Activated B cell treated with CpG ODN at 0.5 μM for 24 hours (primary cell): ENCODE measurements at regions of chr20 and their contacts with region 1.

Region 1: DNA sequence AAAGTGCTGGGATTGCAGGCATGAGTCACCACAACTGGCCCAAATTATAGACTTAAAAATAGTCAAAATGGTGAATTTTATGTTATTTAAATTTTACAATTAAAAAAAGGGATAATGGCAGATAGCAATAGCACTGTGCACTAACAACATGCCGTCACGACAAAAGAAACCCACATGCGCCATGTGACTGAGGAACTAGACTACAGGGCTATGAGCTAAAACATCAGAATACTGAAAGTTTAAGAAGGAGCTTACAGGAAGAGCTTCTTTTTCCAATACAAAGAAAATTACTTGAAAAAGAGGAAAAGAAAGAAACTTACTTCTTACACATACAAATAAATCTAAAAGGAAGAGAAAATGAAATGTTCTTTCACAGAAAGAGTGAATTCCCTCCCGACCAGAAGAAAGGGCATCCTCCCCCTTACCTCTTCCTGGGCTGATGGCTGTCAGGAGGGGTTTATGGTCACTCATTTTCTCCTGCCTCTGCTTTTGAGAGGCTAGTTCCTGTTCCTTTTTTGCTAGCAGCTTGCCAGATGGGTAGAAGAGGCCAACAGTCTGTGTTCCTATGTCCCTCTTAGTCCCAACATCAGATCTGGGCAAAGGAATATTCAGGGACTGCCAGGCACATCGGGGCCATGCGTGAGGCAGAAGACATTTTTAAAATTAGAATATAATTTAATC is 54.5 kb downstream of the DZANK1 start:
- DNase-seq: no peak
- ATAC-seq: peak; percentile 41
- H3K4me3 Mint-ChIP-seq: peak overlapping the region; percentile 69
- H3K27ac Mint-ChIP-seq: peak overlapping the region; percentile 88
- H3K4me1 Mint-ChIP-seq: peaks cover 18% of the 10 kb centered on the region
- H3K27me3 Mint-ChIP-seq: no peaks in the 10 kb centered on the region
- CTCF ChIP-seq: no peak

Region 2: GRCh38 chr20:18250217-18250616 is 162.1 kb before region 1 on chr20:
- CTCF ChIA-PET with region 1: no interaction called
- POLR2A ChIA-PET with region 1: no interaction called
- intact Hi-C with region 1: no loop called
- DNase-seq: no peak
- ATAC-seq: no peak
- H3K4me3 Mint-ChIP-seq: no peak overlapping the region
- H3K27ac Mint-ChIP-seq: no peak overlapping the region
- H3K4me1 Mint-ChIP-seq: no peaks in the 10 kb centered on the region
- H3K27me3 Mint-ChIP-seq: peaks cover 8% of the 10 kb centered on the region
- CTCF ChIP-seq: no peak

Region 3: DNA sequence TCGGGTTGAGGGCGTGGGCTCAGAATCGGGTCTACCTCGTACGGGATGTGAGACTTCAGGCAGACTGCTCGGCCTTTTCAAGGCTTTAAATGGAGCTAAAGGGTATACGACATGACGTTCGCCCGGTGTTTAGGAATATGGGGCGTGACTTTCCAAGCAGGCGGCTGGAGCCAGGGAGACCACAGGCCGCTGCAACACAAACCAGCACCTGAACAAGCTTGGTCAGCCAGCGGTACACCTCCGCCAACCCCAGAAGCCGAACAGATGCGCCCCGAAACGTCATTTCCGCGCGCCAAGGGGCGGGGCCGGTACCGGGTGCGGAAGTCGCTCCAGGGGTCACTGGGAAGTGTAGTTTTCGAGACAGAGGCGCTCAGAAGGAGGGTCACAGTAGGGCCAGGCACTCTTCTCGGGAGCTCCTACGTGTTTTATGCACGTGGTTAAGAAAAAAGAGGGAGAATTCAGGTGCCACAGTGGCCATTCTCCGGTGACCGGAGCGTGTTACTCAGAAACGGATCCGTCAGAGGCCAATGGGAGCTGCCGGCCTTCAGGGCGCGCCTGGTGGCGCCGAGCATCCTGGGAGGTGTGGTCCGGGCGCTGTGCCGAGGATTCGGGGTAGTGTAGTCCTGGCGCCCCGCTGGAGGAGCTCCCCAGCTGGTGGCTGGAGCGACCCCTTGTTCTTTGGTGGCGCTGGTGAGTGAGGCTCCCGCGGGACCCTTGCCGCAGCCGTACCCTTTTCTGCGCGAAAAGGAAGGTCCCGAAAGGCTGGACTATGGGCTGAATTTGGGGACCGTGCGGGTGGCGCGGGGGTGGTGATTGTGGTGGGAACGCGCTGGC is 124.2 kb before region 1 on chr20 and contains the start of gene ZNF133:
- CTCF ChIA-PET with region 1: no interaction called
- POLR2A ChIA-PET with region 1: no interaction called
- intact Hi-C with region 1: loop called (anchors 2 kb)
- DNase-seq: peak; percentile 99
- ATAC-seq: peak; percentile 96
- H3K4me3 Mint-ChIP-seq: peak within 1 kb of the TSS; percentile 92
- H3K27ac Mint-ChIP-seq: peak within 1 kb of the TSS; percentile 97
- H3K4me1 Mint-ChIP-seq: peaks cover 29% of the 10 kb centered on the region
- H3K27me3 Mint-ChIP-seq: peaks cover 16% of the 10 kb centered on the region
- CTCF ChIP-seq: no peak
- total RNA-seq, gene ZNF133: 7.7 and 8.0 TPM in 2 replicates

Region 4: GRCh38 chr20:18507218-18508021 is 95.1 kb after region 1 on chr20 and contains the start of gene SEC23B:
- CTCF ChIA-PET with region 1: no interaction called
- POLR2A ChIA-PET with region 1: interaction called, 12 read pairs
- intact Hi-C with region 1: loop called (anchors 1 kb)
- DNase-seq: peak; percentile 92
- ATAC-seq: peak; percentile 92
- H3K4me3 Mint-ChIP-seq: peak within 1 kb of the TSS; percentile 100
- H3K27ac Mint-ChIP-seq: peak within 1 kb of the TSS; percentile 100
- H3K4me1 Mint-ChIP-seq: peaks cover 36% of the 10 kb centered on the region
- H3K27me3 Mint-ChIP-seq: peaks cover 2% of the 10 kb centered on the region
- CTCF ChIP-seq: no peak
- total RNA-seq, gene SEC23B: 52.0 and 56.6 TPM in 2 replicates

Region 5: GRCh38 chr20:18587665-18588573 is 175.6 kb after region 1 on chr20 and contains the start of gene DTD1:
- CTCF ChIA-PET with region 1: no interaction called
- POLR2A ChIA-PET with region 1: no interaction called
- intact Hi-C with region 1: loop called (anchors 1 kb)
- DNase-seq: peak; percentile 88
- ATAC-seq: peak; percentile 95
- H3K4me3 Mint-ChIP-seq: peak within 1 kb of the TSS; percentile 93
- H3K27ac Mint-ChIP-seq: peak within 1 kb of the TSS; percentile 90
- H3K4me1 Mint-ChIP-seq: peaks cover 24% of the 10 kb centered on the region
- H3K27me3 Mint-ChIP-seq: peaks cover 9% of the 10 kb centered on the region
- CTCF ChIP-seq: no peak
- total RNA-seq, gene DTD1: 26.3 and 27.5 TPM in 2 replicates

Region 6: DNA sequence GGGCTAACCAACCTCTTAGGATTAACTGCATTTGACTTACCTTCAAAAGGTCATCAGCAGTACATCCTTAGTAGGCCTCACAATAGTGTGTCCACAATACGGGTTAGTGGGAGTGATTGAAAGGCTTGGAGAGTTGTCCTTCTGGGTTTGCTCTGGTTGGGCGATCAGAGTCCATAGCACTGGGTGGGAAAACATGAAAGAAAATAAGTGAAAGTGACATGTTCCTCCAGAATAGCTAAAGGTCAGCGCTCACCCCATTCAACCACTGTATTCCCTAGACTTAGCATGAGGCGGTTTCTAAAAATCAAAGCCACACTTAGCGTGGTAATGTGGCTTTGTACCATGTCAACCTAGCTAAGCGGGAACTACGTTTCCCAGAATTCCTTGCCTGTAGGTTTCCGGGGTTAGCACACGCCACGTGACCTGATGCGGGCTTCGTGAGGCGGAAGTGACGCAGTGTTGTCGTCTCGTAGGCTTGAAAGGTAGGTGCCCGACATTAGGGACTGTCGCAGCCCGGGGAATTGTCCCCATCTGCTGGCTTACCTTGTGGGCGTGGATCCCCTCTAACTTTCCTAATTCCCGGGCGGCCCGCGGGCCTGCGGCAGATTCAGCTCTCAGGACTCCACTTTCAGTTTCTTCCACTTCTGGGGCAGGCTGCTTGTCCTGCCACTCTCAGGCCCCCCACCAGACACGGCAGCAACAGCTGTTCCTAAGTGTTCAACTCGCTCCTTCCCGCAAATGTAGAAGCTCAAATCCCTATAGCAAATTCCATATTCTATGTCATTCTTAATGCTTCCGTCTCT is 381.5 kb after region 1 on chr20:
- CTCF ChIA-PET with region 1: no interaction called
- POLR2A ChIA-PET with region 1: no interaction called
- intact Hi-C with region 1: loop called (anchors 1 kb)
- DNase-seq: peak; percentile 73
- ATAC-seq: peak; percentile 92
- H3K4me3 Mint-ChIP-seq: peak overlapping the region; percentile 93
- H3K27ac Mint-ChIP-seq: peak overlapping the region; percentile 97
- H3K4me1 Mint-ChIP-seq: peaks cover 18% of the 10 kb centered on the region
- H3K27me3 Mint-ChIP-seq: peaks cover 11% of the 10 kb centered on the region
- CTCF ChIP-seq: no peak

Region 7: DNA sequence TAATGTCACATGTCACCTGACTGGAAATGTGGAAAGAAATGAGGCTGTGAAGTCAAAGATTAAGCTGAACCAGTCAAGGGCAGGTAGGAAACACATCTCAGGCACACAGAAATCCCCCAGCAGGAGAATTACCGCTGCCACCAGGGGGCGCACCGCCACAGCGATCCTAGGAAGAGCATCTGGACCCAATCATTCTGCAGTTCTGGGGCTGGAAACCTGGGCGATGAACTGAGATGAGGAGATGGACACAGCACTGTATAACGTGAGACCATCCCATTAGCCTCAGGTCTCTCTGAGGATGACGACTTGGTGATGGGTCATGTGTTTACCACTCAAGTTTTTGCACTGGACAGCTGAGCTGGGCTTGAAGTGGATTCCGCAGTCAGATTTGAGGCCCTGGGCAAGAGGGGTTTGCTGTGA is 793.6 kb after region 1 on chr20:
- CTCF ChIA-PET with region 1: no interaction called
- POLR2A ChIA-PET with region 1: no interaction called
- intact Hi-C with region 1: loop called (anchors 2 kb)
- DNase-seq: peak; percentile 57
- ATAC-seq: no peak
- H3K4me3 Mint-ChIP-seq: no peak overlapping the region
- H3K27ac Mint-ChIP-seq: no peak overlapping the region
- H3K4me1 Mint-ChIP-seq: no peaks in the 10 kb centered on the region
- H3K27me3 Mint-ChIP-seq: peaks cover 57% of the 10 kb centered on the region
- CTCF ChIP-seq: peak; percentile 88

Region 8: DNA sequence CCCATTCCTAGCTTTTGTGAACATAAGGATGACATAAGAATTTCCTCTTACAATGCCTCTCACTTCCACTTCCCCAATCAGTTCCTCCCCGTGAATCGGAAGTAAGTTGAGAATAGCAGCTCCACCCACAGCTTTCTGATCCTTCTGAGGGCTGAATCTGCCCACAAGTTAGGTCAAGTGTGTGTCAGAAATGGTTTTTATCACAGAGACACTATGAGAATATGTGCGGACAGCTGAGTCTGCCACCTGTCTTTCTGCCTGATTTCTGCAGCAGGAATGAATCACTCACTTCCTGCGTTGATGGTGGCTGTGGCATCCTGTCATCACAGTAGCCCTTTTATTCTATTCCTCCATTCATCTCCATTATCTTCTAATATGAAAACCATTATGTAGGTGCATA is 1415.9 kb after region 1 on chr20:
- CTCF ChIA-PET with region 1: no interaction called
- POLR2A ChIA-PET with region 1: no interaction called
- intact Hi-C with region 1: loop called (anchors 10 kb)
- DNase-seq: no peak
- ATAC-seq: peak; percentile 96
- H3K4me3 Mint-ChIP-seq: peak overlapping the region; percentile 6
- H3K27ac Mint-ChIP-seq: peak overlapping the region; percentile 56
- H3K4me1 Mint-ChIP-seq: peaks cover 58% of the 10 kb centered on the region
- H3K27me3 Mint-ChIP-seq: no peaks in the 10 kb centered on the region
- CTCF ChIP-seq: no peak